ENCODE measurements at regions of chr14 and their contacts with region 1.

Region 1: DNA sequence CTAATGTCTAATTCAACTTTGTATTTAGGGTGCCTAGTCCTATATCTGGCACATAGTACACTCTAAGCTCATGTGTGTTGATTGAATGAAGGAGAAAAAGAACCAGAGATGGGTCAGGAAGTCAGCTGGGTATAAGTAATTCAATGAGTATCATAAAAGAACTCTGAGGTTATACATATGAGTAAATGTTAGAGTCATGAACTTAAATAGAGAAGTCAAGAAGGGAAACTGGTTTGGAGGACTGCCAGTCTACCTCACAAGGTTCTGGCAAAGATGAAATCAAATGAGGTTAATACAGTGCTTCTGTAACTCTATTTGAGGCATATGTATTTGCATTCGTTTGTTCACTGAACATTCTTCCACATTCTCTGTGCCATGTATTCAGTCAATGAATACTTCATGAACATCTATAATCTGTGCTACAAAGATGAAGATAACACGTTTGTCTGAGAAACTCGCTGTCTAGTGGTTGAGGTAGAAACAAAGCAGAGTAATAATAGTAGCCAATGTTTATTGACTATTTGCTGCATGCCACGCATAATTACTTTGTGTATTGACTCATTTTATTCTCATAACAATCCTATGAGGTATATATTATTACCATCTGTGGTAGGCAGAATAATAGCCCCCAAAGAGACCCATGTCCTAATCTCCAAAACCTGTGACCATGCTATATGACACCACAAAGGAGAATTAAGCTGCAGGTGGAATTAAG is 88.9 kb downstream of the PTGER2 start:
- DNase-seq: no peak
- H3K4me3 ChIP-seq: no peak overlapping the region
- H3K27ac ChIP-seq: no peak overlapping the region
- H3K4me1 ChIP-seq: no peaks in the 10 kb centered on the region
- H3K27me3 ChIP-seq: no peaks in the 10 kb centered on the region
- CTCF ChIP-seq: no peak
- POLR2A ChIP-seq: no peak

Region 2: GRCh38 chr14:52351233-52352060 is 51.5 kb before region 1 on chr14:
- intact Hi-C with region 1: loop called (anchors 1 kb)
- DNase-seq: no peak
- H3K4me3 ChIP-seq: no peak overlapping the region
- H3K27ac ChIP-seq: peak overlapping the region; percentile 37 to 40
- H3K4me1 ChIP-seq: no peaks in the 10 kb centered on the region
- H3K27me3 ChIP-seq: no peaks in the 10 kb centered on the region
- CTCF ChIP-seq: no peak
- POLR2A ChIP-seq: no peak

Region 3: DNA sequence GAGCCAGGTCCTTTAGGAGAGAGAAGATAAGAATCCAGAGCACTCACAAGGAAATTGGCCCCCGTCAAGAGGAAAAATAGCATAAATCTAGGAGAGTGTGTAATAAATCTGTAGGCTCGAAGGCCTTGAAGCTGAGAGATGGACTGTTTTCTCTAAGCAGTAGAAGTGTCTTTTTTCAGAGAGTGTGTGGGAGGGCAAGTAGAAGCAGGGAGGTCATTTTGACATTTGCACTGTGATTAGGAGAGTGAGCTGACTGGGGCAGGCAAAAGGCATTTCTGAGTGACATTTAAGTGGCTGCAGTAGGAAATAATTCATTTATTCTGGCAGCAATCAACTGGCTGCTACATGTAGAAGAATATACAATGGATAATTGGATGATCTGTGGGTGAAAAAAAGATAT is 828.2 kb after region 1 on chr14:
- intact Hi-C with region 1: no loop called
- DNase-seq: no peak
- H3K4me3 ChIP-seq: no peak overlapping the region
- H3K27ac ChIP-seq: no peak overlapping the region
- H3K4me1 ChIP-seq: no peaks in the 10 kb centered on the region
- H3K27me3 ChIP-seq: no peaks in the 10 kb centered on the region
- CTCF ChIP-seq: no peak
- POLR2A ChIP-seq: no peak

Measured in prostate gland (tissue), 2 donors.